ENCODE measurements at regions of chr10 and their contacts with region 1.

Region 1: GRCh38 chr10:32239770-32240169 is 107.2 kb downstream of the EPC1 start:
- DNase-seq: no peak
- H3K4me3 Mint-ChIP-seq: no peak overlapping the region
- H3K27ac Mint-ChIP-seq: no peak overlapping the region
- H3K4me1 Mint-ChIP-seq: peaks cover 9% of the 10 kb centered on the region
- H3K27me3 Mint-ChIP-seq: no peaks in the 10 kb centered on the region

Region 2: GRCh38 chr10:31745612-31746376 is 494.0 kb before region 1 on chr10:
- CTCF ChIA-PET with region 1: no interaction called
- intact Hi-C with region 1: loop called (anchors 1 kb)
- DNase-seq: peak; percentile 84
- H3K4me3 Mint-ChIP-seq: no peak overlapping the region
- H3K27ac Mint-ChIP-seq: peak overlapping the region; percentile 95
- H3K4me1 Mint-ChIP-seq: peaks cover 47% of the 10 kb centered on the region
- H3K27me3 Mint-ChIP-seq: no peaks in the 10 kb centered on the region

Region 3: GRCh38 chr10:32190890-32191491 is 48.8 kb before region 1 on chr10:
- CTCF ChIA-PET with region 1: interaction called, 4 read pairs
- intact Hi-C with region 1: loop called (anchors 2 kb)
- DNase-seq: no peak
- H3K4me3 Mint-ChIP-seq: no peak overlapping the region
- H3K27ac Mint-ChIP-seq: no peak overlapping the region
- H3K4me1 Mint-ChIP-seq: peaks cover 2% of the 10 kb centered on the region
- H3K27me3 Mint-ChIP-seq: no peaks in the 10 kb centered on the region

Region 4: DNA sequence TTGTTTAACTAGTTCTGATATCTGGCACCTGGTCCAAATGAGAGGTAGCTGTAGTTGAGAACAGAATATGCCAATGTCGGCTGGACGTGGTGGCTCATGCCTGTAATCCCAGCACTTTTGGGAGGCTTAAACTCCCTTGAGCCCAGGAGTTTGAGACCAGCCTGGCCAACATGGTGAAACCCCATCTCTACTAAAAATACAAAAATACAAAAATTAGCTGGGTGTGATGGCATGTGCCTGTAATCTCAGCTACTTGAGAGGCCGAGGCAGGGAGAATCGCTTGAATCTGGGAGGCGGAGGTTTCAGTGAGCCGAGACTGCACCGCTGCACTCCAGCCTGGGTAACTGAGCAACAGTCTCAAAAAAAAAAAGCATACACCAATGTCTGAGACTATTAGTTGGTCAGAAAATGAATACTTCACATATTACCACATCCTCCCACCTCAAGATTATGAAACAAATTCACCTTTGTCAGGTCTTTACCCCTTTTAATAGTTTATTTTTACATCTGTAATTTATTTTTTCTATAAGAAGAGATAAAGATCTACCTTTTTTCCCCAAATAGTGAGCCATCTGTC is 68.3 kb after region 1 on chr10:
- CTCF ChIA-PET with region 1: no interaction called
- intact Hi-C with region 1: no loop called
- DNase-seq: no peak
- H3K4me3 Mint-ChIP-seq: no peak overlapping the region
- H3K27ac Mint-ChIP-seq: peak overlapping the region; percentile 15
- H3K4me1 Mint-ChIP-seq: peaks cover 58% of the 10 kb centered on the region
- H3K27me3 Mint-ChIP-seq: no peaks in the 10 kb centered on the region

Region 5: GRCh38 chr10:32346134-32346550 is 106.4 kb after region 1 on chr10:
- CTCF ChIA-PET with region 1: no interaction called
- intact Hi-C with region 1: loop called (anchors 1 kb)
- DNase-seq: peak; percentile 97
- H3K4me3 Mint-ChIP-seq: peak overlapping the region; percentile 89
- H3K27ac Mint-ChIP-seq: peak overlapping the region; percentile 99
- H3K4me1 Mint-ChIP-seq: peaks cover 65% of the 10 kb centered on the region
- H3K27me3 Mint-ChIP-seq: no peaks in the 10 kb centered on the region

Region 6: GRCh38 chr10:32958085-32959005 is 718.6 kb after region 1 on chr10 and contains the start of gene ITGB1:
- CTCF ChIA-PET with region 1: no interaction called
- intact Hi-C with region 1: loop called (anchors 2 kb)
- DNase-seq: peak; percentile 84
- H3K4me3 Mint-ChIP-seq: peak within 1 kb of the TSS; percentile 84
- H3K27ac Mint-ChIP-seq: peak within 1 kb of the TSS; percentile 89
- H3K4me1 Mint-ChIP-seq: peaks cover 40% of the 10 kb centered on the region
- H3K27me3 Mint-ChIP-seq: peaks cover 10% of the 10 kb centered on the region
- total RNA-seq, gene ITGB1: 30.3 to 34.5 TPM

Region 7: GRCh38 chr10:33143160-33143728 is 903.5 kb after region 1 on chr10:
- CTCF ChIA-PET with region 1: interaction called, 3 read pairs
- intact Hi-C with region 1: loop called (anchors 1 kb)
- DNase-seq: peak; percentile 82
- H3K4me3 Mint-ChIP-seq: no peak overlapping the region
- H3K27ac Mint-ChIP-seq: peak overlapping the region; percentile 50
- H3K4me1 Mint-ChIP-seq: peaks cover 52% of the 10 kb centered on the region
- H3K27me3 Mint-ChIP-seq: no peaks in the 10 kb centered on the region

Measured in activated naive CD4-positive, alpha-beta T cell treated with anti-CD3 and anti-CD28 coated beads for 36 hours (primary cell).